ENCODE measurements at regions of chr1 and their contacts with region 1.

Region 1: GRCh38 chr1:39538588-39539465 is 37.8 kb downstream of the PABPC4 start:
- DNase-seq: peak; percentile 20 to 52 (median 34)
- H3K4me3 ChIP-seq: no peak overlapping the region
- H3K4me3 Mint-ChIP-seq: no peak overlapping the region
- H3K27ac ChIP-seq: no peak overlapping the region
- H3K27ac Mint-ChIP-seq: peak overlapping the region in 3 of 8 donors; percentile 8 to 70 (median 15)
- H3K4me1 ChIP-seq: no peaks in the 10 kb centered on the region
- H3K4me1 Mint-ChIP-seq: peaks cover 0 to 11% (median 7%) of the 10 kb centered on the region in 3 donors
- H3K27me3 ChIP-seq: no peaks in the 10 kb centered on the region
- H3K27me3 Mint-ChIP-seq: no peaks in the 10 kb centered on the region

Region 2: GRCh38 chr1:39098546-39099250 is 440.1 kb before region 1 on chr1:
- CTCF ChIA-PET with region 1: interaction called, 11 read pairs
- POLR2A ChIA-PET with region 1: no interaction called
- DNase-seq: peak; percentile 29 to 77 (median 67)
- H3K4me3 ChIP-seq: no peak overlapping the region
- H3K4me3 Mint-ChIP-seq: peak overlapping the region in 1 of 7 donors; percentile 51
- H3K27ac ChIP-seq: no peak overlapping the region
- H3K27ac Mint-ChIP-seq: peak overlapping the region in 5 of 8 donors; percentile 6 to 64 (median 27)
- H3K4me1 ChIP-seq: peaks cover 16% of the 10 kb centered on the region
- H3K4me1 Mint-ChIP-seq: peaks cover 10 to 17% (median 15%) of the 10 kb centered on the region in 3 donors
- H3K27me3 ChIP-seq: no peaks in the 10 kb centered on the region
- H3K27me3 Mint-ChIP-seq: peaks cover 0 to 2% of the 10 kb centered on the region in 2 donors